ENCODE measurements at regions of chr9 and their contacts with region 1.

Region 1: DNA sequence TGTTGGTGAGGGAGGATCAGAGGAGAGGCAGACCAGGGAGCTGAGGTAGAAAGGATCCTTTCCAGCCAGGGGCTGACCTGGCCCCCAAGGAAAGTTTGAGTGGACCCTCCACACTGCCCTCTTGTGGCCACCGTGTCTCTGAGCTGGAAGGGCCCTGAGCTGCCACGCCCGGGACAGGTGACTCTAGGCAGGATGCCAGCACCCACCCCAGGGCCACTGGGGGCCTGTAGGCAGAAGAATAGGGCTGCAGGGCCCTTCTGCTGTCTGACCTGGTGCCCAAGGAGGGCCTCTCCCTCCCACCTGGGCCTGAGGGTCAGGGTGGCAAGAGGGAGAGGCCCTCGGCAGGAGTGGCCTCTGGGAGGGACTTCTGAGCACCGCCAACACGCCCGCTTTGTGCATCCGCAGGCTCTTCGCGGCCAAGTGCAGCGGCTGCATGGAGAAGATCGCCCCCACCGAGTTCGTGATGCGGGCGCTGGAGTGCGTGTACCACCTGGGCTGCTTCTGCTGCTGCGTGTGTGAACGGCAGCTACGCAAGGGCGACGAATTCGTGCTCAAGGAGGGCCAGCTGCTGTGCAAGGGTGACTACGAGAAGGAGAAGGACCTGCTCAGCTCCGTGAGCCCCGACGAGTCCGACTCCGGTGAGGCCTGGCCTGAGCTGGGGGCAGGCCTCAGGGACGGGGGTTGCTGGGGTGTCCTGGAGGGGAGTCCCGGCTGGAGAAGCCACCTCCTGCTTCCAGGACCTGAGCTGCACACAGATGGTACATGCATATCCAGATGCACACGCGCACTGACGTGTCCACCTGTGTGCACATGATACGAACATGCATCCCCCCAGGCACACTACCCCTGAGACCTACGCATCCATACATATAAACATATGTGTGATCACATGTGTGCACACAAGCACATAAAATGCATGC is 77.0 kb downstream of the LMX1B start:
- DNase-seq: peak; percentile 44
- ATAC-seq: peak; percentile 48 to 67

Region 2: DNA sequence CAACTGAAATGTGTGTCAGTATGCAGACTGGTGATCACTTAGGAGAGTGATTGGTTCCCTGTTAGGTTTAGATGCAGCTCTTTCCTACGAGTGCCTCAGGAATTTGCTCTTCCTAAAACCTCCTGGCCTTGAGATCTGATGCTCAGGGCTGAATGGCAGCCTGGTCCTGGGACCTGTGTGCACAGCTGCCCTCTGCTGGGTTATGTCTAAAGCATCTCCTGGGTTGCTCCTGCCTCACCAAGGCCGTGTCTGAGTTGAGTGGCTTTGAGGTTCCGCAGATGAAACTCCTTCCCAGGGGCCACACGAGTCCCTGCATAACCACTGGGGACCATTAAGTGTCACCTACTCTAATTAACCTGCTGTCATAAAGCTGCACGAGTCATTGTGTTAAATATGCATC is 304.6 kb before region 1 on chr9:
- intact Hi-C with region 1: no loop called
- DNase-seq: no peak
- ATAC-seq: peak in 1 of 2 donors; percentile 29

Region 3: DNA sequence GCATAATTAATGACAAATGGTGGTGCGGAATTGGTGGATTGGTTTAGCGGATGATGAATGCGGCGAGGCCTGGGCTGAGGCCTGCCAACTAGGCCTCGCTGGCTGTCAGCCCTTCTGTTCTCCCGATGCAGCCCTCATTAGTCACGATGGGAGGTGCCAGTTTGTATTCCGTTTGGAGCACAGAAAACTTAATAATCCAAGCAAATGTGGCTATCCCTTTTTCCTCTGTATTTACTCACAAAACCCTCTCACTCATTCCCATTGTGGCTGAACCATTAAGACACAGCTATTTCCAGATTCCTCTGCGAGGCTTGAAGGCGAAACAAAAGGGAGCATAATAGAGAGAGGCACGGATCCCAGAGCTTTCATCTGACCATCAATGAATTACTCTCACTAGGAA is 249.8 kb before region 1 on chr9:
- intact Hi-C with region 1: no loop called
- DNase-seq: no peak
- ATAC-seq: no peak

Region 4: DNA sequence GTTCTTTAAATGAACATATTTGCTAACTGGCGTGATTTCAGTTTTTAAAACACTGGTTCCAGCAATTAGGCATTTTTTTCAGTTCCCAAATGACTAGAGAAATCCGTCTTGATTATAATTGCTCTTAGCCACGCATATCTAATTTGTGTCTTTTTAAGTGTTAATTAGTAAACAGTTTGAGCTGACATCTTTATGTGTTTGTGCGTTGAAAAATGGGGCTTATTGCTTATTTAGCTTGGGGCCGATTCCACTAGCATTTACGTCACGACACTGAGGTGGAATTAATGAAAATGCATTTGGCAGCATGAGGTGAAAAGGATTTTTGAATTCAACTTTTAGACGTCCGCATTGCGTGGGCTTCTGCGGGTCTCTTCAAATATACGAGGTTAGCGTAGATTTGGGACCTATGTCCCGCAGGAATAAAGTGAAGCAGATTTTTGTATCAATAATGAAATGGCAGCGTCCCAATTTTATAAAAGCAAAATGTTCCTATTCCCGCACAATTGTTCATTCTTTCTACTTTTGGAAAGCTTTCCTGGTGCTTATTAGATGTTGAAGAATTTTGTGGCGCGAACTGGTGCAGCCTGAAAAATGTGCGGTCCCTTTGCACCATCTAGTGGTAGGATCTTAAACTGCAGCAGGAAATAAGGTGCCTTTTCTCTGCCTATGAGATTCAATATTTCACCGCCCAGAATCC is 199.7 kb before region 1 on chr9:
- intact Hi-C with region 1: no loop called
- DNase-seq: no peak
- ATAC-seq: peak; percentile 42 to 73

Region 5: DNA sequence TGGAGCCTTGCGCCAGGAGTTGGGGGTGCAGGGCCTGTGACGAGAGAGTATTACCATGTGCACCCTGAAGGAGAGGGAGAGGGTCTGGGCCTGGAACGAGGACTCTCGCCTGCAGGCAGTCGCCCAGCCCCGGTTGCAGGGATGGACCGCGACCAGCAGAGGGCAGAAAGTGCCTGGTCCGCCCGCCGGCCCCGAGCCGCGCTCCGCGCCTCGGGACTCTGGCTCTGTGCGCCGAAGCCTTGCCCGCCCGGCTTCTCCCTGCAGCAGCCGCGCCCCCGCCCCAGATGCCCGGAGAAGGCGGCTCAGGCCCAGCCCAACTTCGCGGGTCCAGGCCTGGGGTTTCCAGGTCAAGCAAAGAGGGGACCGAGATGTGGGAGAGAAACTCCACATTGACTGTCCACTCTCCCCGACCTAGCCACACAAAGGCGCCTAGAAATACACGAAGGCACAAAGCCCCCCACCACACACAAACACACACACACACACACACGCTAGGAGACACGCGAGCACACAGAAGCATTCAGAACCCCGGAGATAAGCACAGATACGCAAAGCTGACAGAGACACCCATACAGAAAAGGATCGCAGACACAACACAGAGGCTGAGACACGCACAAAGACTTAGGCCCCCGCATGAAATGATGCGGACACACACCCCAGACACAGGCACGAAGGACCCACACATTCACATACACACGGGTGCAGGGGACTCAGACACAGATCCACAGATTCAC is 78.9 kb before region 1 on chr9:
- intact Hi-C with region 1: loop called (anchors 5 kb)
- DNase-seq: peak; percentile 83
- ATAC-seq: peak; percentile 81 to 82

Region 6: GRCh38 chr9:126745574-126746411 is 55.1 kb after region 1 on chr9:
- intact Hi-C with region 1: no loop called
- DNase-seq: no peak
- ATAC-seq: no peak